Caco-2 (cell line): ENCODE measurements at regions of chr2 and their contacts with region 1.

Region 1: DNA sequence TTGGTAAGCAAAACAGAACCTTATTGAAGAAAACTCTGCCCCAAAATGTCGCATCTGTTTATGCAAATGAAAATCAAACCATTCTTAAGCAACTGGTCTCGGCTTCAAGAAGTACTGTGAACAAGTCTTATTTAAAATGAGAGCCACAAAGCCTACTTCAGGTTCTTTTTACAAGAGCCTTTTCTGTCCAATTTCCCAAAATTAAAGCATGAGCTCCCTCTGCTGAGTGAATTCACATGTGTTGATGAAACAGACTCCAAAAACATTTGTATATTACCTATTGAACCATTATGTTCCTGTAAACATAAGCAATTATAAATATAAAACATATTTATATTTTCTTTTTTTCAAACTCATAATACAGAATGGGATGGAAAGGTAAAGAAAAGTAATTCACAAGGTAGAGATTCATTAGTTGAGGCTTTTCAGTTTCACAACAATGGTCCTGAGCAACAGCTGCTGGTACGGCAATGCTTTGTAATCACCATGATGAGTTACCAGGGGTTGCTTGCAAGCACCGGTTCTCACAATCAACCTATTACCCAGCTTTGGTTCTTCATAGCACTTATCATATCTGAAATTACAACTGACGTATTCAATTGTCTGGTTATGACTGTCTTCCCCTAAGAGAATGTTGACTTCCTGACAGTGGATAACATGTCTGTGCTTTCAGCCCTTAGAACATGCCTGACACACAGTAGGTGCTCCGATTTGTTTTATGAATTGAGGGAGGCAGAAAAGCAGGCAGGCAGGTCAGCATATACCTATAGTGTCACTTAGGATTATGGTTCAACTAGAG is 108.4 kb upstream of the BZW1 start:
- DNase-seq: peak in 1 of 2 experiments; percentile 60
- H3K4me3 ChIP-seq: no peak overlapping the region
- H3K4me3 Mint-ChIP-seq: no peak overlapping the region
- H3K27ac Mint-ChIP-seq: no peak overlapping the region
- H3K4me1 ChIP-seq: no peaks in the 10 kb centered on the region
- H3K4me1 Mint-ChIP-seq: peaks cover 13% of the 10 kb centered on the region
- H3K27me3 ChIP-seq: no peaks in the 10 kb centered on the region; the same call in 1 of the 2 replicates
- H3K27me3 Mint-ChIP-seq: no peaks in the 10 kb centered on the region
- CTCF ChIP-seq: peak; percentile 42 to 58

Region 2: GRCh38 chr2:199973703-199974102 is 729.6 kb before region 1 on chr2:
- CTCF ChIA-PET with region 1: no interaction called
- POLR2A ChIA-PET with region 1: no interaction called
- intact Hi-C with region 1: loop called (anchors 1 kb)
- DNase-seq: no peak
- H3K4me3 ChIP-seq: no peak overlapping the region
- H3K4me3 Mint-ChIP-seq: no peak overlapping the region
- H3K27ac Mint-ChIP-seq: no peak overlapping the region
- H3K4me1 ChIP-seq: peaks cover 14% of the 10 kb centered on the region
- H3K4me1 Mint-ChIP-seq: peaks cover 15% of the 10 kb centered on the region
- H3K27me3 ChIP-seq: no peaks in the 10 kb centered on the region
- H3K27me3 Mint-ChIP-seq: no peaks in the 10 kb centered on the region
- CTCF ChIP-seq: peak; percentile 46 to 76

Region 3: GRCh38 chr2:200483729-200484198 is 219.6 kb before region 1 on chr2:
- CTCF ChIA-PET with region 1: interaction called, 8 read pairs
- POLR2A ChIA-PET with region 1: no interaction called
- intact Hi-C with region 1: loop called (anchors 1 kb)
- DNase-seq: peak; percentile 76 to 78
- H3K4me3 ChIP-seq: no peak overlapping the region
- H3K4me3 Mint-ChIP-seq: no peak overlapping the region
- H3K27ac Mint-ChIP-seq: no peak overlapping the region
- H3K4me1 ChIP-seq: peaks cover 26% of the 10 kb centered on the region
- H3K4me1 Mint-ChIP-seq: peaks cover 27% of the 10 kb centered on the region
- H3K27me3 ChIP-seq: no peaks in the 10 kb centered on the region
- H3K27me3 Mint-ChIP-seq: no peaks in the 10 kb centered on the region
- CTCF ChIP-seq: peak; percentile 52 to 85

Region 4: GRCh38 chr2:200603982-200604381 is 99.3 kb before region 1 on chr2:
- CTCF ChIA-PET with region 1: no interaction called
- POLR2A ChIA-PET with region 1: no interaction called
- intact Hi-C with region 1: no loop called
- DNase-seq: peak in 1 of 2 experiments; percentile 30
- H3K4me3 ChIP-seq: no peak overlapping the region
- H3K4me3 Mint-ChIP-seq: peak overlapping the region; percentile 21
- H3K27ac Mint-ChIP-seq: peak overlapping the region; percentile 28
- H3K4me1 ChIP-seq: peaks cover 22% of the 10 kb centered on the region
- H3K4me1 Mint-ChIP-seq: peaks cover 28% of the 10 kb centered on the region
- H3K27me3 ChIP-seq: no peaks in the 10 kb centered on the region
- H3K27me3 Mint-ChIP-seq: no peaks in the 10 kb centered on the region
- CTCF ChIP-seq: no peak

Region 5: DNA sequence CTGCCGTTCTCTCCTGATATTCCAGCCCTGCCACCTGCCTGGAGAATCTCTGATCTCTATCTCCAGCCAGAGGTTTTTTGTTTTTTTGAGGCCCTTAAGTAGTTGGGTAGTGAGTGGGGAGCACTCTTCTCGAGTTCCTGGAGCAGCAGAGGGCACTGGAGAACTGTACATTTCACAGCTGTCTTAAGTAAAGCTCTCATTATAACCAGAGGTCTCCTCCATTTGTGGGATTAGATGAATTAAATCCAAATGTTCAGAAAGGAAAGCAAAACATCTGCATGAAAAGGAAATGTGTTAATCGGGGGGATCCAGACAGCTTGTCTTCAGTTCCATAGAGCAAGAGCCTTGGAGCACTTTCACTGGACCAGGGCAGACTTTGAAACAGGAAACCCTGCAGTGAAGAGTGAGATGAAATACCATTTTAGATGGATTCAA is 84.7 kb before region 1 on chr2:
- CTCF ChIA-PET with region 1: interaction called, 8 read pairs
- POLR2A ChIA-PET with region 1: no interaction called
- intact Hi-C with region 1: loop called (anchors 1 kb)
- DNase-seq: peak in 1 of 2 experiments; percentile 30
- H3K4me3 ChIP-seq: no peak overlapping the region
- H3K4me3 Mint-ChIP-seq: no peak overlapping the region
- H3K27ac Mint-ChIP-seq: no peak overlapping the region
- H3K4me1 ChIP-seq: no peaks in the 10 kb centered on the region
- H3K4me1 Mint-ChIP-seq: peaks cover 7% of the 10 kb centered on the region
- H3K27me3 ChIP-seq: no peaks in the 10 kb centered on the region
- H3K27me3 Mint-ChIP-seq: no peaks in the 10 kb centered on the region
- CTCF ChIP-seq: peak in 1 of 2 experiments; percentile 55

Region 6: GRCh38 chr2:200735061-200735460 is 31.7 kb after region 1 on chr2:
- CTCF ChIA-PET with region 1: interaction called, 3 read pairs
- POLR2A ChIA-PET with region 1: no interaction called
- intact Hi-C with region 1: loop called (anchors 5 kb)
- DNase-seq: no peak
- H3K4me3 ChIP-seq: no peak overlapping the region
- H3K4me3 Mint-ChIP-seq: no peak overlapping the region
- H3K27ac Mint-ChIP-seq: no peak overlapping the region
- H3K4me1 ChIP-seq: no peaks in the 10 kb centered on the region; the same call in 1 of the 2 replicates
- H3K4me1 Mint-ChIP-seq: peaks cover 8% of the 10 kb centered on the region
- H3K27me3 ChIP-seq: no peaks in the 10 kb centered on the region; the same call in 1 of the 2 replicates
- H3K27me3 Mint-ChIP-seq: no peaks in the 10 kb centered on the region
- CTCF ChIP-seq: no peak

Region 7: DNA sequence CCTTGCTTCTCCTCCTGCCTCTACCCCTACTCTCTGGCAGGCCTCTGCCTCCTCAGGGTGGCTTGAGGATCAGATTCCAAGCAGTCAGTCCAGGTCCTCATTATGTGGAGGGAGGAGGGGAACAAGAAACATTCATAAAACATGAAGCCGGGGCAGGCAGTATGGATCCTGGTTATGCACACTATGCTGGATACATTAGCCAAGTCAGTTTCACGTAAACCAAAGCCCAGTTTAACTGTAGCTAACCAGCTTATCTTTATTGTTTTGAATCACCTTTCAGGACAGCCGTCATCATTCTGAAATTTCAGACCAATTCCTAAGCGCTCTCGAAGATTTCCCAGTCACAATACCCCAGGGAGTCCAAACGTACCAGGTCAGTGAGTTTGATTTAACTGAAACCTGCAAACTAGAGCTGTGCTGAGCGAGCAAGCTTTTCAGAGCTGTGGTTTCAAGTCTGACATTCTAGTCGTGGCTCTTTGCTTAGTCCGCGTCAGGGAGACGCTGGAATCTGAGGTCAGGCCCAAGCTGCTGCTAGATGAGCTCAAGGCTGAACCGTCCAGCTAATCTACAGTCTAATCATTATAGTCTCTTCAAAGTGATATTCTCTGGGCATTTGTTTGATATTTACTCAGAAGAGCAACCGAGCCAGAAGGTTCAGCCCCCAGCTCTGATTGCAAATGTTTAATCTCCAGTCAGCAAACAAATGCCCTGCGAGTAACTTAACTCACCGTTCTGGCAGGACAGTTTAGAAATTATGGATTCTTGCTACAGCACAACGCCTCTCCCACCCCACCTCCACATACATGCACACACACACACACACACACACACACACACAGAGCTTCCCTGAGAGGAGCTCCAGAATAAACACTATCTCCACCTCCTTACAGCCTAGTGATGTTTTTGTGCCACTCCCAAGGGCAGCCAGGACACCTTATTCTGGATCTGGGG is 44.6 kb after region 1 on chr2:
- CTCF ChIA-PET with region 1: no interaction called
- POLR2A ChIA-PET with region 1: no interaction called
- intact Hi-C with region 1: no loop called
- DNase-seq: peak; percentile 77 to 87
- H3K4me3 ChIP-seq: no peak overlapping the region
- H3K4me3 Mint-ChIP-seq: peak overlapping the region; percentile 63
- H3K27ac Mint-ChIP-seq: peak overlapping the region; percentile 90
- H3K4me1 ChIP-seq: peaks cover 50% of the 10 kb centered on the region
- H3K4me1 Mint-ChIP-seq: peaks cover 32% of the 10 kb centered on the region
- H3K27me3 ChIP-seq: no peaks in the 10 kb centered on the region
- H3K27me3 Mint-ChIP-seq: no peaks in the 10 kb centered on the region
- CTCF ChIP-seq: no peak